Posterior cingulate gyrus (tissue), 11 donors: ENCODE measurements at regions of chr2 and their contacts with region 1.

Region 1: DNA sequence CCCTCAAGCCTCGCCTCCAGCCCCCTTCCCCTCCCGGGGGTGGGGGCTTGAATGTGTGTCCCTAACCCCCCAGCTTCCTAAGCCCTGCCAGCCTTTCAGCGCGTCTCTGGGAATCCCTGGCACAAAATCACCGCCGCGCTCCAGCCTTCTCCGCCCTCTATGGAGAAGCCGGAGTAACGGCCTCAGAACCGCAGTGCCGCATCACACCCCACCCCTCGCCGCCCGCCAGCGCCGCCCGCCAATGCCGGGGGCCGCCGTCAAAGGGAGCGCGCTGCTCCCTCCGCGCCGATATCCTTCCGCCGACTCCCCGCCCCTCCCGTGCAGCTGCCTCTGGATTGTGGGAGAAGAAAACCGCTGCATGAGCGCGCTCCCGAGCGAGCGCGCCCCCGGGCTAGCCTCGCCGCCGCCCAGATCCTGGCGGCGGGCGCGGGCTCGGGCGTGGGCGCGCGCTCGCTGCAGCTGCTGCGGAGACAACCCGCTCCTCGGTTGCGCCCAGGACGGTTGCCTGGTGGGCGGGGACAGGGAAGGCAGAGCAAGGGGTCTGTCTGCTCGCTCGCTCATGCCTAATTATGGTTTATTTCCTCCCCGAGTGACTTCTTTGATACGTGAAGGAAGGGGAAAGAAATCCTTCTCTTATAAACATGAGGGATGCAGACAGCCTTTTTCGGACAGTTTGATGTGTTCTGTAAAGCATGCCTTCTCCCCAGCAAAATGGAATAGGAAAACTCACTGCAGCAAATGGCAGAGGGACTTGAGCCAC is at the start of gene CCDC88A:
- DNase-seq: peak; percentile 92 to 99 (median 96)

Region 2: GRCh38 chr2:55232084-55232862 is 187.6 kb before region 1 on chr2 and contains the starts of genes CLHC1 and RPS27A:
- intact Hi-C with region 1: loop called (anchors 5 kb)
- DNase-seq: peak; percentile 85 to 98 (median 90)

Region 3: DNA sequence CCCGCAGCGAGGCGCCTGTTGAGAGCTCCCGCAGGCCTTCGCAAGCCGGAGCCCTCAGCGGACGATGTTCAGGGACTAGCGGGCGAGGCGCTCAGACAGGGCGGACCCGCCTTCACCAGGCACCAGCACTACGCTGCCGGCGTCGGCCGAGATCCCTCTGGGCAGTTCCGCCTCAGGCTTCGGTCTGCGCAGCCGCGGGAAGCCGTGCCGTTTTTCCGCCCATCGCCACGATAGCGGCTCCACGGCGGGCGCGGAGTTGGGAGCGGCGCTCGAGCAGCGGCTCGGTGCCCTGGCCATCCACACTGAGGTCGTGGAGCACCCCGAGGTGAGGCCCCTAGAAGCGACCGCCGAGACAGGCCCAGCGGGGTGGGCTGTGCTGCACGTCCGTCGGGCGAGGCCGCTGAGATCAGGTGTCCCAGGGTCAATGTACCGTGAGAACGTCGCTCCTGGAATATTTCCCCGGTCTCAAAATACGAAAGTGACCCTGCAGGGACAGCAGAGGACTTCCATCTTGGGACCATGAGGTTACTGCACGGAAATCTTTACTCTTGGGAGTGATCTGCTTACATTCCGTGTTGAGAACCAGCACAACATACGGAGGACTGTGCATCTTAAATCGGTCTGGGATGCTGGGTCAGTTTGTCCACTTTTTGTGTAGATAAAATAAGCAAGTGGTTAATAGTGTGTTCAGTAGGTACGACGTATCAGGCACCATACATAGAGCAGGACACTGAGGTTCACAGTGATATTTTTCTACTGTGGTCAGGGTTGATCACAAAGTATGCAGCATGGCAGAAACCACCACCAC is 137.5 kb before region 1 on chr2:
- intact Hi-C with region 1: loop called (anchors 5 kb)
- DNase-seq: peak; percentile 73 to 97 (median 84)

Region 4: DNA sequence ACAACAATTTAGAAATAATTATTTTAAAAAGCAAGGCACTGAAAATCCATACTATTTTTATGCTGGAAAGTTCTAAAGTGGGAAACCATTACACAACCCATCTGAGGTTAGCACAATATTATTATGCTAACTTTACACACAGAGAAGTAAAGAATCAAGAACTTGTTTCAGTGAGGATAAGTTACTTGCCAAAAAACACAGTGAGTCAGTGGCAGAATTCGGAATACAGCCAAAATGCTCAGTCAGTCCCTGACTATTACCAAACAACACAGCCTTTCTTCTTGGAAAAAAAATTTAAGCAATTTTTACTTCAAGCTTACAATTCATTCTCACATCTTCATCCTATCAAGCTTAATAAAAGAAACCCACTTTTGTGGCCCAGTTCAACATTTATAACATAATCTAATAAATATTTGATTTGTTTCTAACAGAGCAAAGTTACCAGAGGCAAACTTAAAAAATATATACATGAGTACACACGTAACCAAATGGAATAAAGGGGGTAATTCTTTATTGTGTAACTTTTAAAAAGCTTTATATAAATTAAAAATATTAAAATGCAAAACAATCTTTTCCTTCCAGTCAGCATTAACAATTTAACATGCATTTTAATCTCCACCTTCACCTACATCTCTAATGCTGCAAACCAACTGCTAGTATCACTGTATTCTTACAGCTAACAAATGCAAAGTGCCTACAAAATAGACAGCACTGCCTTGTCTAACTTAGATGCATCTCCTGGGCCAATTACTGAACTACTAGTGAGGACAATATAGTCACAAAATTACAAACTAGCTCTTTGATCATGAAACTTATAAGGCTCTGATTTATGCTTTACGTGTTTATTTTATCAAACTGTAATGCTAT is 55.4 kb before region 1 on chr2:
- intact Hi-C with region 1: loop called (anchors 5 kb)
- DNase-seq: peak in 4 of 10 donors; percentile 14 to 53 (median 18)

Region 5: DNA sequence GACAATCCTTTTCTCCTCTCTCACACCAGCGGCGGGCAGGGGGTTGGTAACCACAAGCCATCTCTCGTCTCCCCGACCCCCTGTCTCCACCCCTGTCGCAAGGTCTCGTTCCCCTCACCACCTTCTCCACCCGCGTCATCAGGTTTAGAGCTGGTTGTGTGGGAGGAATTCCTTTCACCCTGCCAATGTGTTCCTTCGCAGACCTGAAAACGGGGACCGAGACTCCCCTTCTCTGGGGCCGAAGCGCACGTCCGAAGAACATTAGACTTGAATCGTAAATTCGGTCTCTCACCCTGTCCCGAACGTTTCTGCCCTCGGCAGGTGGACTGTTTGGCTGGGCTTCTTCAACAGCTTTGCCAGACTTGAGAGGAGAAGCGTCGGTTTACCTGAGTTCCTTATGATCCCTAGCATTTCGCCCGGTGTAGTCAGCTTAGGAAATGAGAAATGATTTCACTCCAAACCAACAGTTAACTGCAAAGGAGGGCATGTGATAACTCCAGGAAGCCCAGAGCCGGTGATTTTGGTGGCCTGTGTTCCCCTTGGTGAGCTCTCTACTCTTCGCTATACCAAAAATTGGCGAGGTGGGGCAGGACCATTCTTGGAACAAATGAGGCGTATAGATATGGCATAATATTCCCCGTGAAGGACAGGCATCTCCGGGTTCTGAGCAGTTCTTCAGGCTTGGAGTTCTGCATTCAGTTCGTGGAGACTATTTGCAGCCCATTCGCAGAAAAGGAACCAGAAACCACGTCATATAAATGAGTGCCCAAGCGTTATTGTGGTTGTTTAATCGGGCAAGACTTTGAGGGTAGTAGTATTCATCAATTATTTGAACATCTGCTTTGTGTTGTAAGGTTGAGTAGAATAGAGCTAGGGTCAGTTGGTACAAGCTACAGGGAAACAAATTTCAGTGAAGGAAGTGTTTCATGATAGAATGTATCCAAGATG is 100.4 kb after region 1 on chr2:
- intact Hi-C with region 1: loop called (anchors 1 kb)
- DNase-seq: peak in 6 of 10 donors; percentile 10 to 79 (median 26)

Region 6: DNA sequence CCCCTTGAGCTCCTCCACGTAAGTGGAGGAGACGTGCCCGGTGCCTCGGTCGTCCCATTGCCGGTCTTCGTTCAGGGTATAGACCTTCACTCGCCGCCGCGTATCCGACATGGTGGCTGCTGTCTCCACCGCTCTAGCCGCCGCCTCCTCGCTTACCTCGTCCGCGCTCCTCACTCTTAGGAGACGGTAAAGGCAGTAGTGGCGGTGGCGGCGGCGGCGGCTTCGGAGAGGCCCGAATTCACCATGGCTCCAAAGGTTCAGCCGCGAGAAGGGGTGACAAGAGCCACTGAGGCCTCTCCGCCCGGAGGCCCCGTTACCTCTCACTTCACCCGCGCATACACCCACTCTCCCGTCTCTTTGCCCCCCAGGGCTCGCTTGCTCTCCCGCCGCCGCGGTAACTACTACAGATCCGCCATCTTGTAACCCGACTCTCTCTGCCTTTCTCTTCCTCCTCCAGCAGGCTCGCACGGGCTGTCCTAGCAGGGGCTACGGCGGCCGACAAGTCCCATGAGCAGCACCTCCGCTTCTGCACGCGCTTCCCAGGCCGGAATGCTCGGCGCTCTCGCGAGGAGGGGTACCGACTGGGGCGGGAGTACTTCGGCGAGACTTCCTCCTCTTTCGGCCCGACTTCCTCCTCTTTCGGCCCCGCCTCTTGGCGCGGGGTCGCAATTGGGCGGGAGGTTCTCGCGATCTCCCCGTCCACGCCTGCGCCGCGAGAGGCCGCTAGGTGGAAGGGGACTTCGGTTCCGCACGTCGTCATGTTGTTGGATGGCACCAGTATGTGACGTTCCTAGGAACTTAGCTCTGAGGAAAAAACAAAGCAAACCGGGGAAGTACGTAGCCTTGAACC is 197.5 kb after region 1 on chr2 and contains the start of gene PPP4R3B:
- intact Hi-C with region 1: loop called (anchors 10 kb)
- DNase-seq: peak; percentile 98 to 100 (median 99)

Region 7: GRCh38 chr2:55771612-55772011 is 351.8 kb after region 1 on chr2:
- intact Hi-C with region 1: no loop called
- DNase-seq: no peak

Region 8: DNA sequence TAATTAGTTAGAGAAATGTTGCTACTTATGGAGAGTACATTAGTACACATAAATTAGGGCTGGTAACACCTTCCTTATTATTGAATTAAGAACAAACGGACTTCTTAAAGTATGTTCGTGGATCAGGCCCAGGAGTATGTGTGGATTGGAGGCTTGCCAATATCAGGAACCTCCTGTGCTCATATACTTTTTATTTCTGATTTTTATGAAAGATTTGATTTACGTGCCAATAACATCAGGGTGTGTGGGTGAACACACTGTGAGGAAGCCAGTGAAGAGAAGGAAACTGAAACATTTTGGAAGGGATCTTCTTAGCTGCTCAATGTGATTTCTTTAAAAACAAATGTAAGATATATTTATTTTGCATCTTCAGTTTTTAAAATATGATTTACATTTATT is 390.8 kb after region 1 on chr2:
- intact Hi-C with region 1: no loop called
- DNase-seq: no peak